Activated T-helper 2 cell treated with anti-CD3 and anti-CD28 coated beads, Interferon-gamma antibody, Interleukin-2, Interleukin-4, amounts not matched to agents 10 μg/mL and 5 μg/mL and 100 μg/mL, durations not matched to agents 14 hours and 24 hours and 36 hours (primary cell): ENCODE measurements at regions of chr21 and their contacts with region 1.

Region 1: GRCh38 chr21:28516991-28517592 is 475.6 kb downstream of the LTN1 start:
- DNase-seq: peak; percentile 39
- H3K4me3 Mint-ChIP-seq: no peak overlapping the region
- H3K27ac Mint-ChIP-seq: no peak overlapping the region
- H3K4me1 Mint-ChIP-seq: no peaks in the 10 kb centered on the region
- H3K27me3 Mint-ChIP-seq: peaks cover 8% of the 10 kb centered on the region

Region 2: DNA sequence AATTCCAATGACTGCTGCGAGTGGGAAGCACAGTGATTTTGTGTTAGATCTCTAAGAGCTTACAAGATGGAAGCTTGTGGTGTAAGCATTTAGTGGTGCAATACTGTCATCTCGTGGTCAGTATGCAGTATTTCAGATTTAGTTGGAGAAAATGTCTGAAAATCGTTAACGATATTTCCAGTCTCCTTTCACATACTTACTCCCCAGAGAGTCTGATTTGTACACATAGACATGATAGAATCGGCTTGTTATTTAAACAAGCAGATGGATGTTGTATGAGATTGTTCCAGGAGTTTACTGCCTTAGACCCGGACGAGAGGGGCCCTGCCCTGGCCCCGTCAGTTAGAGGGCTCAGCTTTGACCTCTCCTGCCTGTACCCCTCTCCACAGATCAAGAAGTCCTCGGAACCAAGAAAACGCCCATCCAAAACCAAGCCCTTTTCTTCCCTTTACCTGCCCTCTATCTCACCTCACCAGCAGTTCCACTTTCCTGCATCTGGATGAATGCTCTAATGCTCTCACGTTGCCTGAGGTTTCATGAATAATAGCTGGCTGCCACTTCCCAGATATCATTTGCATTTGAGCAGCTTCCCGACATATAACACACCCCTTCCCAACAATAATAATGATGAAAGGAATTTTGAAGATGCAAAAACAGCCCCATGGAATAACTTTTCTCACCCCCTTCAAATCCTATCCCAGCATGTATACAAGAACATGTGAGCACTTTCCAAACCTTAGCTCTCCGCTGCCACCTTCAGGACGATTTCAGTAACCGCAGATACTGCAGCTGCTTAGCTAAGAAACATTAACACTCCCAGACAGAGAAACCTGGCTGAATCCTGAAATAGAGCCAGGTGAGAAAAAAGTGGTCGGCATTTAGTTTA is 228.3 kb after region 1 on chr21:
- intact Hi-C with region 1: loop called (anchors 1 kb)
- DNase-seq: peak; percentile 55
- H3K4me3 Mint-ChIP-seq: no peak overlapping the region
- H3K27ac Mint-ChIP-seq: no peak overlapping the region
- H3K4me1 Mint-ChIP-seq: no peaks in the 10 kb centered on the region
- H3K27me3 Mint-ChIP-seq: no peaks in the 10 kb centered on the region

Region 3: GRCh38 chr21:28943631-28944030 is 426.5 kb after region 1 on chr21:
- intact Hi-C with region 1: loop called (anchors 1 kb)
- DNase-seq: no peak
- H3K4me3 Mint-ChIP-seq: no peak overlapping the region
- H3K27ac Mint-ChIP-seq: no peak overlapping the region
- H3K4me1 Mint-ChIP-seq: no peaks in the 10 kb centered on the region
- H3K27me3 Mint-ChIP-seq: no peaks in the 10 kb centered on the region